ENCODE measurements at regions of chr6 and their contacts with region 1.

Region 1: GRCh38 chr6:150334790-150335783 is 33.7 kb upstream of the IYD start:
- DNase-seq: peak; percentile 20 to 38
- H3K4me3 ChIP-seq: no peak overlapping the region
- H3K27ac ChIP-seq: no peak overlapping the region
- H3K4me1 ChIP-seq: peaks cover 13% of the 10 kb centered on the region
- H3K27me3 ChIP-seq: no peaks in the 10 kb centered on the region
- CTCF ChIP-seq: peak; percentile 92

Region 2: GRCh38 chr6:149934249-149935156 is 400.6 kb before region 1 on chr6:
- CTCF ChIA-PET with region 1: no interaction called
- POLR2A ChIA-PET with region 1: no interaction called
- intact Hi-C with region 1: loop called (anchors 5 kb)
- DNase-seq: peak; percentile 29 to 50
- H3K4me3 ChIP-seq: no peak overlapping the region
- H3K27ac ChIP-seq: no peak overlapping the region
- H3K4me1 ChIP-seq: peaks cover 24% of the 10 kb centered on the region
- H3K27me3 ChIP-seq: no peaks in the 10 kb centered on the region
- CTCF ChIP-seq: peak; percentile 92

Region 3: DNA sequence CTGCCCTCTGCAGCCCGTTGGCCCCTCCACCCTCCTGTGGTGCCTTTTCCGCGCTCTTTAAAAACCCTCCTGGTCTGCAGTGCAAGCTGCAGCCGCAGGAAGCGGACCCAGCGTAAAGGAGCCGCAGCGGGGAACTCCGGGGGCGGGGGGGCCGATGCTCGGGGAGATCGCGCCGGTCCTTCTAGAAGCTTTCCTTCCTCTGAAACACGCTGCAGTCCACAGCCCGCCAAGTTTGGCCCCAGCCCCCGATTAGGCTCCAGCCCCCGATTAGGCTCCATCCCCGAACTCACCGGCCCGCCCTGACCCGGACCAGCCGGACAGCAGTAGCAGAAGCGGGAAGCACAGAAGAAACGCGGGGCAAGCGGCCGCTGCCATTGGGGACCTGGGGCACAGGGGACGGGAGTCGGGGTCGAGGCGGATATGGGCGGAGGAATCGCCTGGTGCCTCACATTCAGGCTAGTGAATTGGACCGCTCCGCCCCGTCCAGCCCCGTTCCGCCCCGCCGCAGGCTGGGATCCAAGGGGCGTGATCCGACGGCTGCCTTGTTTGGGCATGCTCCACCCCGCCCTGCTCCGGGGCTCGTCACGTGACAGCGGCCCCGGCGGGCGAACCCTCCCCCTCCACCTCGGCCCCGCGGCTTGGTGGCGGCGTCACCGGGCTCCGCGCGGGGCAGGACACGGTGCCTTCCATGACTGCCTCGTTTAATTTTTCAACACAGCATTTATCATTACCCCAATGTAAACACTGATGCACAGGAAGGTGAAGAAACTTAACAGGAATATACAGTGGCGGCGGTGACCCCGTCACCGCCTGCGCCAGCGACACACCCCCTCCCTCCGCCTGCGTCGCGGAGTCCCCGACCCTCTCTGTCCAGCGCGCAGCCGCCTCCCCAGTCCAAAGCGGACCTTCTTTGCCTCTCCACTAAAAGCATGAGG is 330.0 kb before region 1 on chr6:
- CTCF ChIA-PET with region 1: no interaction called
- POLR2A ChIA-PET with region 1: no interaction called
- intact Hi-C with region 1: loop called (anchors 5 kb)
- DNase-seq: peak; percentile 78 to 92
- H3K4me3 ChIP-seq: peak overlapping the region; percentile 60
- H3K27ac ChIP-seq: no peak overlapping the region
- H3K4me1 ChIP-seq: peaks cover 16% of the 10 kb centered on the region
- H3K27me3 ChIP-seq: no peaks in the 10 kb centered on the region
- CTCF ChIP-seq: no peak; the same call in 1 of the 2 replicates

Region 4: GRCh38 chr6:150079604-150080003 is 255.5 kb before region 1 on chr6:
- CTCF ChIA-PET with region 1: no interaction called
- POLR2A ChIA-PET with region 1: no interaction called
- intact Hi-C with region 1: loop called (anchors 1 kb)
- DNase-seq: no peak
- H3K4me3 ChIP-seq: no peak overlapping the region
- H3K27ac ChIP-seq: no peak overlapping the region
- H3K4me1 ChIP-seq: peaks cover 9% of the 10 kb centered on the region
- H3K27me3 ChIP-seq: no peaks in the 10 kb centered on the region
- CTCF ChIP-seq: no peak

Region 5: DNA sequence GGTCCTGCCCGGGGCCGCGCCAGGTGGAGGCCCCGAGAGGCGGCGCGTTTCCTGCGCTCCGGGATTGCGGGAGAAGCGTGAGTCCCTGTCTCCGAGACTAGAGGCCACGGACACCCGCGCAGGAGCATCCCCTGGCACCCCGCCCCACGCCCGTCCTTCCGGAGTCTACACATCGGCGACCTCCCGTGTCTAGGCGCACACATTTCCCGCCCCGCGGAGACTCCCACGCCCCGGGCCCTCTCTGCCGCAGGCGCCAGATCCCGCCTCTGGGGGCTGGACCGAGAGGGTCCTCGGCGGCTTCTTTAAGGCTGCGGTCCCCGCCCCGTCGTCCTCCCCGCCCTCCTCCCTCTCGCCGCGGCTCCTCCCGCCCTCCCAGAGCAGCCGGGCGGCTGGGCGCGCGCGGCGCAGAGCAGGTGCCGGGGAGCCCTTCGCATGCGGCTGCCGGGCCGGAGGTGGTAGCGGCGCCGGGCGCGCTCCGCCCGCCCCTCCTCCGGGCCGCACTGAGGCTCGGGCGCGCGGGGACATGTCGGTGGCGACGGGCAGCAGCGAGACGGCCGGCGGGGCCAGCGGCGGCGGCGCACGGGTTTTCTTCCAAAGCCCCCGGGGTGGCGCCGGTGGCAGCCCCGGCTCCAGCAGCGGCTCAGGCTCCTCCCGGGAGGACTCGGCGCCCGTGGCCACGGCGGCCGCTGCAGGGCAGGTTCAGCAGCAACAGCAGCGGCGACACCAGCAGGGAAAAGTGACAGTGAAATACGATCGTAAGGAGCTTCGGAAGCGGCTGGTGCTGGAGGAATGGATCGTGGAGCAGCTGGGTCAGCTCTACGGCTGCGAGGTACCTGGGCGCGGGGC is 192.2 kb before region 1 on chr6 and contains the start of gene PPP1R14C:
- CTCF ChIA-PET with region 1: no interaction called
- POLR2A ChIA-PET with region 1: no interaction called
- intact Hi-C with region 1: loop called (anchors 2 kb)
- DNase-seq: peak in 1 of 2 experiments; percentile 59
- H3K4me3 ChIP-seq: peak within 1 kb of the TSS; percentile 76
- H3K27ac ChIP-seq: peak within 1 kb of the TSS; percentile 71
- H3K4me1 ChIP-seq: peaks cover 68% of the 10 kb centered on the region
- H3K27me3 ChIP-seq: no peaks in the 10 kb centered on the region
- CTCF ChIP-seq: no peak
- total RNA-seq, gene PPP1R14C: 9.8 and 12.1 TPM in 2 replicates

Region 6: GRCh38 chr6:150368762-150369161 is 33.7 kb after region 1 on chr6 and contains the start of gene IYD:
- CTCF ChIA-PET with region 1: no interaction called
- POLR2A ChIA-PET with region 1: no interaction called
- intact Hi-C with region 1: no loop called
- DNase-seq: no peak
- H3K4me3 ChIP-seq: no peak within 1 kb of the TSS
- H3K27ac ChIP-seq: no peak within 1 kb of the TSS
- H3K4me1 ChIP-seq: no peaks in the 10 kb centered on the region
- H3K27me3 ChIP-seq: no peaks in the 10 kb centered on the region
- CTCF ChIP-seq: no peak
- total RNA-seq, gene IYD: not detected in 2 replicates

Region 7: GRCh38 chr6:150395398-150396009 is 60.4 kb after region 1 on chr6:
- CTCF ChIA-PET with region 1: no interaction called
- POLR2A ChIA-PET with region 1: no interaction called
- intact Hi-C with region 1: loop called (anchors 10 kb)
- DNase-seq: peak in 1 of 2 experiments; percentile 60
- H3K4me3 ChIP-seq: no peak overlapping the region
- H3K27ac ChIP-seq: no peak overlapping the region
- H3K4me1 ChIP-seq: peaks cover 12% of the 10 kb centered on the region
- H3K27me3 ChIP-seq: no peaks in the 10 kb centered on the region
- CTCF ChIP-seq: peak; percentile 82

Measured in PC-9 (cell line).